AG04450 (cell line): ENCODE measurements at regions of chr9 and their contacts with region 1.

Region 1: DNA sequence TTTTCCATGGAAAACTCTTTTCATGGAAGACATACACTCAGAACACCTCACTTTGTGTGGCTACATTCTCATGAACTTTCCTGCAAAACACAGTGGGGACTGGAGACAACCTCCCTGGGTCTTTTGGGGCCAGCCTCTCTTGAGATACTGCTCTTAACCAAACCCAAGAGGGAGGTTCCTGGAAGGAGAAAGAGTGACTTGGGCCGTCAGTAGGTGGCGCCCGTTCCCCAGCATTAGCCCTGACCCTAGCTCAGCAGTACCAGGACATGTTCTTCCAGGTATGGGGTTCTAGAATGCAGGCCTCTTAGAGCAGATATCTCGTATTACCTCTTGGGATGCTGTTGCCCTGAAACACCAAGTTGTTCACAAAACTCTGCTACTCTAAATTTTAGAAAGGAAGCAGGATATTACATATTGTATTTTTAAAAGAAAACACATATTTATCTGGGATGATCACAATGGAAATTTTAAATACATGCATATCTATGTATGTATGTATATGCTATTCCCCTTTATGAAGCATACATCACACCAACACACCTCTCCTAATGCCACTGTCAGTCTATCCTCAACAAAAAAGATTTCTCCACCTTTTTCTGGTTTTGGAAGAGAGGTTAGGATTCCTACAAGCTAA is 15.8 kb upstream of the GLIS3 start:
- DNase-seq: no peak
- H3K4me3 ChIP-seq: no peak overlapping the region
- H3K27ac ChIP-seq: no peak overlapping the region
- H3K27me3 ChIP-seq: no peaks in the 10 kb centered on the region
- CTCF ChIP-seq: peak; percentile 93

Region 2: GRCh38 chr9:4077499-4078102 is 238.1 kb before region 1 on chr9:
- CTCF ChIA-PET with region 1: interaction called, 10 read pairs
- POLR2A ChIA-PET with region 1: no interaction called
- DNase-seq: peak; percentile 29
- H3K4me3 ChIP-seq: no peak overlapping the region
- H3K27ac ChIP-seq: no peak overlapping the region
- H3K27me3 ChIP-seq: no peaks in the 10 kb centered on the region
- CTCF ChIP-seq: peak; percentile 70

Region 3: DNA sequence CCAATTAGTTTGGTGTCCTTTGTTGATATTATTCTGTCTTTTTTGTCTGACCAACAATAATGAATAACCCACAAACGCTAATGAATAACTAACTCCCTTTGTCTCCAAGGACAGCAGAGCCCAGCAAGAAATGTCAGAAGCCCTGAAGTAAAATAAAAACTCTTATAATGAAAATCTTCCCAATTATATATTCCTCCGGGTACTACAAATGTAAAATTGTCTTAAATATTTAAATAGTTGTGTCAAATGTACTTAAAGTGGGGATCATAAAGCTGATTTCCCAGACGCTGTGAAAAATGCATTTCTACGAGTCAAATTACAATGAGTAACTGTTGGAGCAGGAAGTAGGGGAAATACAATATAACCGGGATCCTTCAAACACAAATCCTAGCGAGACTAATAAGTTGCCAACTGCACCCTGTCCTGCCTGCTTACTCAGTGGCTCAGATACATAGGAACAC is 38.1 kb before region 1 on chr9:
- CTCF ChIA-PET with region 1: no interaction called
- POLR2A ChIA-PET with region 1: no interaction called
- DNase-seq: no peak
- H3K4me3 ChIP-seq: no peak overlapping the region
- H3K27ac ChIP-seq: no peak overlapping the region
- H3K27me3 ChIP-seq: no peaks in the 10 kb centered on the region
- CTCF ChIP-seq: no peak

Region 4: DNA sequence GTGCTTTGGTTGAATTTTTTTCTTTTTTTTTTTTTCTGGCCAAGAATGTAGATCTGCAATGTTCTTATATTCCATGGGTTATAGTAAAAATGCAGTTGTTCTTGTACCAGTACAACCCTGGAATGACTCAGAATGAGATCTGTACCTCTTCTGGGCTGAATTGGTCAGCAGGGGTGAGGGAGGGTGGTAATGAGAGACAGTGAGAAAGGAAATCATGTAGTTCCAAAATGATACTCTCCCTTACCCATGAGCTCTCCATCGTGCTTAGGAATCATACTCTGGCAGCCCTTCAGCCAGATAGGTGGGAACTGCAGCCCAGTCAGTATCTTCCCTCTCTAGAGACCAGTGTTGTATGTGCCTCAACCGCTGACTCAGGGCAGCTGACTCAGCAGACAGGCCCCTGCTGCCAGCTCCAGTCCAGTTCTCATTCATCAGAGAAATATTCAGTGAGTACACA is 13.7 kb before region 1 on chr9:
- CTCF ChIA-PET with region 1: interaction called, 24 read pairs
- POLR2A ChIA-PET with region 1: no interaction called
- DNase-seq: peak; percentile 81
- H3K4me3 ChIP-seq: no peak overlapping the region; the same call in 1 of the 2 replicates
- H3K27ac ChIP-seq: peak overlapping the region; percentile 62
- H3K27me3 ChIP-seq: no peaks in the 10 kb centered on the region
- CTCF ChIP-seq: no peak

Region 5: DNA sequence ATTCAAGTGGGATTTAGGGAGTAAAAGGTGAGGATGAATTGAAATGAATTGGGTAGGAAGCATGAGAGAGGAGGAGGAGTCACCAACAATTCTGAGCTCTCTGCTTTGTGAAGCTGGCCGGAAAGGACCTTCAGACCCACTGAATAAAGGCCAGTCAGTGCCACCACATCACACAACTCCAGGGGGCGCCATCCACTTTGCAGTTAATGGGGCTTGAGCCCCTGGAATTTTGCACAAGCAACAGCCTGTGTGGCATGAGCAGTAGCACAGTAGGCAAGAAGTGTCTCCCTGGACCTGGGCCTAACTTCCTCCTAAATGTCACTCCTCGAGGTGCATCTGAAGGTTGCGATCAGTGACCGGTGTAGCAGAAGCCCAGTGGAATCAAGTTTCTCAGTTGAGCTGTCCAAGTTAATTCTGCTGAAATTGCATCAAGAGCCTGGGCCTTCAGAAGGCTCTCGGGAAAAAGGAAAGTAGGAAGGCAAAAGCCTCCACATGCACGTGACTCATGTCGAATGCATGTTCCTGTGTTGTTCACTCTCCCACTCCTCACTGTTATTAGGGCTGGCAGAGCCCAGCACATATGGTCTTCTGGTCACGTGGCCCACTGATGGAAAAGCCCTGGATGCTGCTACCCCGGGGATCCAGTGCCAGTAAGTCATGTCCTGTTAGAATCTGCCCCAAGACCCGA is 11.9 kb after region 1 on chr9:
- CTCF ChIA-PET with region 1: interaction called, 11 read pairs
- POLR2A ChIA-PET with region 1: no interaction called
- DNase-seq: peak; percentile 38
- H3K4me3 ChIP-seq: no peak overlapping the region
- H3K27ac ChIP-seq: peak overlapping the region; percentile 25
- H3K27me3 ChIP-seq: peaks cover 2% of the 10 kb centered on the region
- CTCF ChIP-seq: peak; percentile 34

Region 6: GRCh38 chr9:4349816-4350418 is 34.2 kb after region 1 on chr9:
- CTCF ChIA-PET with region 1: interaction called, 13 read pairs
- POLR2A ChIA-PET with region 1: no interaction called
- DNase-seq: no peak
- H3K4me3 ChIP-seq: no peak overlapping the region
- H3K27ac ChIP-seq: no peak overlapping the region
- H3K27me3 ChIP-seq: no peaks in the 10 kb centered on the region
- CTCF ChIP-seq: no peak

Region 7: DNA sequence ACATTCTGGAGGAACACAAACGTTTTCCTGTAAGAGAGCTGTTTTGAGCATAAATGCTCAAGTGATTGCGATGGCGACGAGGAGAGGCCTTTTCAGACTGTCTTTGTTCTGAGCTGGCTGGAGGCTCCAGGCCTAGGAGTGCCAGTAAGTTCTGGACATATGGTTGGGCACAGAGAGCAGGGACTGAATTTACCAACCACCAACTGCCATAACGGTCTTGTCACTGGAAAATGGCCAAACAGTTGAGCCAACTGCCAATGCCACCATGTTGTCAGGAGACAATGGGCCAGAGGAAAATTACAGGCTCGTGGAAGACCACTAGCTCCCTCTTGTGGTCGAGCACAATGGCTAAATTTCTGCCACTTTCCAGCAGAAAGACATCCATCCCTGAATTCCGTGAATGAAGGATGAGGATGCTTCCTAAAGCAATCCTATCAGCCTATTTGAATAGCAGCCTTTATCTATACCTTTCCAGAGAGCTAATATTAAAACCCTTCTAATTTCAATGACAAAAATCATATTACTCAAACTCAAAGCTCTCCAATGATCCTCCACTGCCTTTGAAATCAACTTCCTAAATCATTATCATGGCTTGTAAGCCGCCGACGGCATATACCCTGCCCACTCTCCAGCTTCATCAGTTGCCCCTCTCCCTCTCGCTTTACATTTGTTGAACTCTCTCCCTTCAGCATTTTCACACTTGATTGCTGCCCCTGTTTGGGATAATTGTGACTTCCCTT is 51.1 kb after region 1 on chr9:
- CTCF ChIA-PET with region 1: interaction called, 54 read pairs
- POLR2A ChIA-PET with region 1: no interaction called
- DNase-seq: peak; percentile 24
- H3K4me3 ChIP-seq: no peak overlapping the region
- H3K27ac ChIP-seq: no peak overlapping the region
- H3K27me3 ChIP-seq: peaks cover 5% of the 10 kb centered on the region
- CTCF ChIP-seq: peak; percentile 87